ENCODE measurements at regions of chr3 and their contacts with region 1.

Region 1: GRCh38 chr3:18531662-18532236 is 106.6 kb upstream of the SATB1 start:
- DNase-seq: peak; percentile 9
- H3K4me3 Mint-ChIP-seq: no peak overlapping the region
- H3K27ac Mint-ChIP-seq: no peak overlapping the region
- H3K4me1 Mint-ChIP-seq: peaks cover 17% of the 10 kb centered on the region
- H3K27me3 Mint-ChIP-seq: no peaks in the 10 kb centered on the region

Region 2: DNA sequence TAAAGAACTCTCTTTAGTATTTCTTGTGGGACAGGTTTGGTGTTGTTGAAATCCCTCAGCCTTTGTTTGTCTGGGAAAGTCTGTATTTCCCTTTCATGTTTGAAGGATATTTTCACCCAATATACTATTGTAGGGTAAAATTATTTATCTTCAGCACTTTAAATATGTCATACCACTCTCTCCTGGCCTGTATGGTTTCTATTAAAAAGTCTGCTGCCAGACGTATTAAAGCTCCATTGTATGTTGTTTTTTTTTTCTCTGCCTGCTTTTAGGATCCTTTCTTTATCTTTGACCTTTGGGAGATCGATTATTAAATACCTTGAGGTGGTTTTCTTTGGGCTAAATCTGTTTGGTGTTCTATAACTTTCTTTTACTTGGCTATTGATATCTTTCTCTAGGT is 670.3 kb before region 1 on chr3:
- CTCF ChIA-PET with region 1: no interaction called
- POLR2A ChIA-PET with region 1: no interaction called
- intact Hi-C with region 1: no loop called
- DNase-seq: no peak
- H3K4me3 Mint-ChIP-seq: no peak overlapping the region
- H3K27ac Mint-ChIP-seq: no peak overlapping the region
- H3K4me1 Mint-ChIP-seq: no peaks in the 10 kb centered on the region
- H3K27me3 Mint-ChIP-seq: no peaks in the 10 kb centered on the region

Region 3: DNA sequence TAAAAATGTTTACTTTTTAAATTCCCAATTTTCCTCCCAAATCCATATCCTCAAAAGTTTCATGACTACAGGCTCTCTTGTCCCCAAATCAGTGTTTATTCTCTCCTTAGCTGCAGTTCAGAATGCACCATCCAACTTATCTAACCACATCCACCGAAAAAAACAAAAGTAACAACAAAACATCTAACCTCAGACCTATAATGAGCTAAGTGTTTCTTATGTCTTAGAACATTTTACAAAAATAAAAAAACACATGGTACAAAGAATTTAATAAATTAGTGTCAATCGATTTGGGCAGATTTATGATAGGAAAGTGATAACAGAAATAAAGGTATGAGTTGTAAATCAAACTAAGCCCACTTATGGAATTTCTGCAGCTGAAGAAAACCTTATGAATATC is 120.2 kb before region 1 on chr3:
- CTCF ChIA-PET with region 1: no interaction called
- POLR2A ChIA-PET with region 1: no interaction called
- intact Hi-C with region 1: no loop called
- DNase-seq: no peak
- H3K4me3 Mint-ChIP-seq: peak overlapping the region; percentile 42
- H3K27ac Mint-ChIP-seq: peak overlapping the region; percentile 59
- H3K4me1 Mint-ChIP-seq: peaks cover 76% of the 10 kb centered on the region
- H3K27me3 Mint-ChIP-seq: no peaks in the 10 kb centered on the region

Region 4: GRCh38 chr3:18444595-18445400 is 87.0 kb before region 1 on chr3:
- CTCF ChIA-PET with region 1: no interaction called
- POLR2A ChIA-PET with region 1: no interaction called
- intact Hi-C with region 1: no loop called
- DNase-seq: peak; percentile 87
- H3K4me3 Mint-ChIP-seq: peak overlapping the region; percentile 99
- H3K27ac Mint-ChIP-seq: peak overlapping the region; percentile 99
- H3K4me1 Mint-ChIP-seq: peaks cover 36% of the 10 kb centered on the region
- H3K27me3 Mint-ChIP-seq: no peaks in the 10 kb centered on the region

Region 5: DNA sequence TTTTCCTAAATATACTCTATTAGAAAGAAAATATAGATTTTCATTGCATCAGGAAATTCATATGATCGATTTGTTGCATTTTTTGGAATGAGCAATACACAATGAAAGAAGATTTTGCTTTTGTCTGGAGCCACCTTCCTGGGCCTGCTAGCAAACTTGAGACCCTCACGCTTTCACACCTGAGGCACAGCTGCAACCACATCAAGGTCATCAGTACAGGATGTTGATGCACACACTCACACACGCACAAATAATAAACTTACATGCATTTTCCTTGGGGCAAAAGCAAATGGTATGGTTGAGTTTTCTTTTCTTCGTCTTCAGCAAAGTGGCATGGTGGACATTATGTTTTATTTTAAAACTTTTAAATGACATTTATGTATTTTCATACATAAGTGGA is 41.8 kb before region 1 on chr3:
- CTCF ChIA-PET with region 1: no interaction called
- POLR2A ChIA-PET with region 1: no interaction called
- intact Hi-C with region 1: no loop called
- DNase-seq: peak; percentile 30
- H3K4me3 Mint-ChIP-seq: no peak overlapping the region
- H3K27ac Mint-ChIP-seq: no peak overlapping the region
- H3K4me1 Mint-ChIP-seq: peaks cover 24% of the 10 kb centered on the region
- H3K27me3 Mint-ChIP-seq: no peaks in the 10 kb centered on the region

Region 6: GRCh38 chr3:18500322-18500721 is 31.4 kb before region 1 on chr3:
- CTCF ChIA-PET with region 1: no interaction called
- POLR2A ChIA-PET with region 1: no interaction called
- intact Hi-C with region 1: loop called (anchors 1 kb)
- DNase-seq: no peak
- H3K4me3 Mint-ChIP-seq: no peak overlapping the region
- H3K27ac Mint-ChIP-seq: no peak overlapping the region
- H3K4me1 Mint-ChIP-seq: peaks cover 37% of the 10 kb centered on the region
- H3K27me3 Mint-ChIP-seq: no peaks in the 10 kb centered on the region